ENCODE measurements at regions of chr2 and their contacts with region 1.

Region 1: GRCh38 chr2:19955544-19956422 is 34.1 kb downstream of the WDR35 start:
- DNase-seq: peak; percentile 48
- H3K4me3 ChIP-seq: no peak overlapping the region
- H3K27ac ChIP-seq: no peak overlapping the region
- H3K27me3 ChIP-seq: no peaks in the 10 kb centered on the region
- CTCF ChIP-seq: peak; percentile 94

Region 2: DNA sequence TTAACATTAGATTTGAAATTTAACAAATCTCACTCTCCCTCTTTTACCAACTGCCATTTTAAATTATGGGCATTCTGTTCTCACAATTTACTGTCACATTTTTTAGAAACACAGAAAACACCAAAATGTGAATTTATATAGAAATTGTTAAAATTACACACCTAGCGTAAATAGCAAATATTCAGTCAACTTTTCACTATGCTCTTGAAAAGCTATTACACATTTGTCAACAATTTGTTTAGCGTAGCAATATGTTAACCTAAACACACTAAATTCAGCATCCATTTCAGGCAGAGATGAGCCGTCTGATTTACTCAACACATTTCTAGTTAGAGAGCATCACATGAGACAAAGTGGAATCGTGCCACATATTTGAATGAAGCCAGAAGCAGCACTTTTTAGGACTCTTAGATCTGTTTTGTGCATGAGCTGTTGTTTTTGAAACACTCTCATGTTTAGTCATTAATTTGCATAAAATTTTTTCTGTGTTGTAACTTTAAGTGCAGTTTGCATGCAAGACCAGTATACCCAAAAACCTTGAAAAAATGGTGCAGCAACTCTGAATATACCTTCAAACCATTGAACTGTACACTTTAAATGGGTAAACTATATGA is 62.2 kb before region 1 on chr2:
- CTCF ChIA-PET with region 1: no interaction called
- POLR2A ChIA-PET with region 1: no interaction called
- DNase-seq: no peak
- H3K4me3 ChIP-seq: no peak overlapping the region
- H3K27ac ChIP-seq: no peak overlapping the region
- H3K27me3 ChIP-seq: no peaks in the 10 kb centered on the region
- CTCF ChIP-seq: no peak

Region 3: GRCh38 chr2:19971691-19972090 is 15.9 kb after region 1 on chr2:
- CTCF ChIA-PET with region 1: interaction called, 11 read pairs
- POLR2A ChIA-PET with region 1: no interaction called
- DNase-seq: no peak
- H3K4me3 ChIP-seq: no peak overlapping the region
- H3K27ac ChIP-seq: no peak overlapping the region
- H3K27me3 ChIP-seq: no peaks in the 10 kb centered on the region
- CTCF ChIP-seq: no peak

Region 4: GRCh38 chr2:20097879-20098714 is 142.3 kb after region 1 on chr2:
- CTCF ChIA-PET with region 1: interaction called, 17 read pairs
- POLR2A ChIA-PET with region 1: no interaction called
- DNase-seq: peak; percentile 82
- H3K4me3 ChIP-seq: no peak overlapping the region
- H3K27ac ChIP-seq: no peak overlapping the region
- H3K27me3 ChIP-seq: no peaks in the 10 kb centered on the region
- CTCF ChIP-seq: peak; percentile 90

Region 5: DNA sequence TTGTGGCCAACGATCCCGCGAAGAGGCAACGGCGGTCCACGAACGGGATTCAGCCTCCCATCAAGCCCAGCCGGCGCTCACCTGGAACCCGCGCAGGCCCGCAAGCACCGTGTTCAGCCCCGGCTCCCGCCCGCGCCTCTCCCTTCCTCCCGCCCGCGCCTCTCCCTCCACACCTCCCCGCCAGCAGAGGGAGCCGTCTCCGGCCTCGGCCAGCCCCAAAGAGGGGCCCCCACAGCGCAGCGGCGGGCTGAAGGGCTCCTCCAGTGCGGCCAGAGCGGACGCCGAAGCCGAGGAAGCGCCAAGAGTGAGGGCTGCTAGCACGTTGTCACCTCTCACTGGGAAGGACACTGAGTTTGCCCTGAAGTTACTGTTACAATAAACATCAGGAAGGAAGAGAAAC is 151.0 kb after region 1 on chr2:
- CTCF ChIA-PET with region 1: interaction called, 10 read pairs
- POLR2A ChIA-PET with region 1: no interaction called
- DNase-seq: no peak
- H3K4me3 ChIP-seq: peak overlapping the region; percentile 37
- H3K27ac ChIP-seq: no peak overlapping the region
- H3K27me3 ChIP-seq: no peaks in the 10 kb centered on the region
- CTCF ChIP-seq: peak; percentile 51

Region 6: GRCh38 chr2:20291106-20291564 is 335.4 kb after region 1 on chr2:
- CTCF ChIA-PET with region 1: interaction called, 11 read pairs
- POLR2A ChIA-PET with region 1: no interaction called
- DNase-seq: peak; percentile 44
- H3K4me3 ChIP-seq: no peak overlapping the region
- H3K27ac ChIP-seq: no peak overlapping the region
- H3K27me3 ChIP-seq: no peaks in the 10 kb centered on the region
- CTCF ChIP-seq: peak; percentile 70

Measured in AG04450 (cell line).